Psoas muscle (tissue), 8 donors: ENCODE measurements at regions of chr3 and their contacts with region 1.

Region 1: DNA sequence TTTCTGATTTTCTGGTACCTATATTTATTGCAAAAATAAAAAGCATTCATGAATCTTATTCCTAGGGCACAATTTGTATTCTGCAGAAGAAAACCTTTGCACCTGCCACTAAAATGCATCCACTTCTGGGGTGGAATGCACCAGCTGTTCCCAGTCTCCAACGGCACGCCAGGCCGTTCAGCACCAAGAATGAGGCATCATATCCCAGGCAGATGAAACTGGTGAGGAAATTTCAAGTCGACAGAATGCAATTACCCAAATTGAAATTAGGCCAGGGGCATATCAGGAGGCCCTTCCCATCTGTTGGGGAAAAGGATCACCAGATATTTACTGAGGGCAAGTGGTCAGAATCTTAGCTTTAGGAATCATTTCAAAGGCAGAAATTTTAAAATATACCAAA is 13.6 kb upstream of the RBMS3 start:
- DNase-seq: no peak
- ATAC-seq: peak in 1 of 4 donors; percentile 59
- H3K4me3 ChIP-seq: no peak overlapping the region
- H3K27ac ChIP-seq: no peak overlapping the region
- H3K4me1 ChIP-seq: peaks cover 7% of the 10 kb centered on the region
- H3K27me3 ChIP-seq: no peaks in the 10 kb centered on the region
- CTCF ChIP-seq: no peak

Region 2: DNA sequence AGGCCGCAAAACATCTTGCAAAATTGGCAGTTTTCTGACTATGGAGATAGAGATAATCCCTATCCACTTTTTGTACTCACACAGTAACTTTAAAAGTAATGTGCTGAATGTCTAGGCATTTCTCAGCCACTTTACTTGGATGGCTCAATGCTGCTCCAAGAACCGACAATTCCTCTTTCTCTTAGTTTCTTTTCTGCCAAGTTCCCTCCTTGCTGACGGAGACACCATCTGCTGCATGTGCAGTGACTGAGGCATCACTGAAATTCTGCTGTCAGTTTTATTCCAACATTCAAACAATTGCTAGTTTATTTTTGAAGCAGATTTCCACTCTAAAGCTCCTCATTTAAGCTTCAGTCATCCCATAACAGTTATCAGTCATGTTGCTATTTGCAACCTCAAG is 102.4 kb before region 1 on chr3:
- intact Hi-C with region 1: loop called in 1 of 2 experiments (anchors 10 kb)
- DNase-seq: no peak
- ATAC-seq: no peak
- H3K4me3 ChIP-seq: no peak overlapping the region
- H3K27ac ChIP-seq: no peak overlapping the region
- H3K4me1 ChIP-seq: no peaks in the 10 kb centered on the region
- H3K27me3 ChIP-seq: no peaks in the 10 kb centered on the region
- CTCF ChIP-seq: no peak

Region 3: DNA sequence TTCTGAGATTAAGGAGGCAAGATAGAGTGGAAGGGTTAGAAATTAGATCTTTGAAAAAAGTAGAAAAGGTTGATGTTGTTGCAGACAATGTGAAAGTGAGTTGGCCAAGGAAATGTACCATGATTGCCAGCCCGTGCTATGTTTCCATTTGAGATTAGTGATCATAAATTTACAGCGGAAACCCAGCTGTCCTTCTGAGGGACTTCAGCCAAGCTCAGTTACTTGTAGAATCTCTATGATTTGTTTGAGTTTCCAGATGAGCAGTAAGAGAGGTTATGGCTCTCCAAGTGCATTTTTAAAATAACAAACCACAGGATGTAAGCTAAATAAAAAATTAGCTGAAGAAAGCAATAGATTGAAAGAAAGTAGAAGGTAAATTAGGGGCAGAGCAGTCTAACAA is 40.5 kb before region 1 on chr3:
- intact Hi-C with region 1: no loop called
- DNase-seq: no peak
- ATAC-seq: peak in 2 of 4 donors; percentile 30 to 67
- H3K4me3 ChIP-seq: no peak overlapping the region
- H3K27ac ChIP-seq: no peak overlapping the region
- H3K4me1 ChIP-seq: peaks cover 9% of the 10 kb centered on the region
- H3K27me3 ChIP-seq: no peaks in the 10 kb centered on the region
- CTCF ChIP-seq: no peak

Region 4: GRCh38 chr3:29255854-29256696 is 11.2 kb before region 1 on chr3:
- intact Hi-C with region 1: loop called in 1 of 2 experiments (anchors 1 kb)
- DNase-seq: no peak
- ATAC-seq: peak; percentile 35 to 75 (median 48)
- H3K4me3 ChIP-seq: no peak overlapping the region
- H3K27ac ChIP-seq: no peak overlapping the region
- H3K4me1 ChIP-seq: peaks cover 9% of the 10 kb centered on the region
- H3K27me3 ChIP-seq: no peaks in the 10 kb centered on the region
- CTCF ChIP-seq: no peak

Region 5: DNA sequence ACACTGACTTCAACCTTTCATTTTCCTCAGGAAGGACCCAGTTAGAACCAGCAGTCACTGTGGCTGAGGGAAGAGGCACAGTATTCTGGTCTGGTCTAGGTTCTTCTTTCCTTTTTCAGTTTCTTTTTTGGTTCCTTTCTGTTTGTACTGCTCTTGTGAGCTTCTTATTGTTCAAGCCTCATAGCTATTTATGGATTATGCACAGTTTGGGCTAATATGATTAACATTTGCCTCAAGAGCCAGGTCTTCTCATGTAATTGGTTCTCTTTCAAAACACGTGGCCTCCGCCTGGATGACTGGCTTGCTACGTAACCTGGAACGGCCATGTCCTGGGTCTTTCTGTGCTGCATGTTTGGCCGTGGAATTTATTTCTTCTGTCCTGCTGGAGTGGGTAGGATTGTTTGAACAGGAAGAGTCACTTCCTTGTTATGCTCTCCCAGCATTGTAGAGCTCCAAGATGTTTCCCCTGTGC is 57.0 kb after region 1 on chr3:
- intact Hi-C with region 1: no loop called
- DNase-seq: peak; percentile 50 to 68
- ATAC-seq: peak; percentile 85 to 91 (median 89)
- H3K4me3 ChIP-seq: peak overlapping the region; percentile 56
- H3K27ac ChIP-seq: peak overlapping the region; percentile 79
- H3K4me1 ChIP-seq: peaks cover 53% of the 10 kb centered on the region
- H3K27me3 ChIP-seq: no peaks in the 10 kb centered on the region
- CTCF ChIP-seq: no peak

Region 6: DNA sequence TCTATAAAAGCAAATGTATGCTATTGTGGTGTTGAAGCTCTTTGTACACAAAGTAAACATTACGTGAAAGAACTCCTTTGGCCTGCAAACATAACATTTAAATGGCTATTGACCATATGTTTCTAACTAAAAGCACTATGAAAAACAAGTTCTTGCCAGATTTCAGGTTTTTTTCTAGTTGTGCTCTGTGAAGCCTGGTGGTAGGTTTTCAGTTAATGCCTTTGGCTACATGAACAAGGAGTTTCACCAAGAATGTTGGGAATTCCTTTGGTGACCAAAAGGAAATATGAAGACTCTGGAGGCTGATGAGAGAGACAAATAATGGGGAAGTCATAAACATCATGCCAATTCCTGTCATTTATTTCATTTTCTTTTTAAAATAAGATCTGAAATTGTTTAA is 79.6 kb after region 1 on chr3:
- intact Hi-C with region 1: no loop called
- DNase-seq: no peak
- ATAC-seq: no peak
- H3K4me3 ChIP-seq: no peak overlapping the region
- H3K27ac ChIP-seq: no peak overlapping the region
- H3K4me1 ChIP-seq: peaks cover 6% of the 10 kb centered on the region
- H3K27me3 ChIP-seq: no peaks in the 10 kb centered on the region
- CTCF ChIP-seq: no peak